ENCODE measurements at regions of chr12 and their contacts with region 1.

Region 1: GRCh38 chr12:112198120-112198733 is 72.9 kb downstream of the TRAFD1 start:
- DNase-seq: peak in 3 of 5 donors; percentile 14 to 61 (median 22)
- H3K4me3 ChIP-seq: no peak overlapping the region
- H3K4me3 Mint-ChIP-seq: no peak overlapping the region
- H3K27ac ChIP-seq: no peak overlapping the region
- H3K27ac Mint-ChIP-seq: peak overlapping the region in 1 of 8 donors; percentile 86
- H3K4me1 ChIP-seq: no peaks in the 10 kb centered on the region
- H3K4me1 Mint-ChIP-seq: no peaks in the 10 kb centered on the region
- H3K27me3 ChIP-seq: no peaks in the 10 kb centered on the region
- H3K27me3 Mint-ChIP-seq: no peaks in the 10 kb centered on the region

Region 2: GRCh38 chr12:112386726-112387125 is 188.5 kb after region 1 on chr12:
- CTCF ChIA-PET with region 1: interaction called, 40 read pairs
- POLR2A ChIA-PET with region 1: no interaction called
- DNase-seq: no peak
- H3K4me3 ChIP-seq: no peak overlapping the region
- H3K4me3 Mint-ChIP-seq: peak overlapping the region in 1 of 7 donors; percentile 17
- H3K27ac ChIP-seq: no peak overlapping the region
- H3K27ac Mint-ChIP-seq: peak overlapping the region in 1 of 8 donors; percentile 79
- H3K4me1 ChIP-seq: peaks cover 4% of the 10 kb centered on the region
- H3K4me1 Mint-ChIP-seq: peaks cover 8 to 13% (median 11%) of the 10 kb centered on the region in 3 donors
- H3K27me3 ChIP-seq: no peaks in the 10 kb centered on the region
- H3K27me3 Mint-ChIP-seq: peaks cover 0 to 6% of the 10 kb centered on the region in 2 donors